Heart left ventricle (tissue), 16 donors: ENCODE measurements at regions of chr17 and their contacts with region 1.

Region 1: DNA sequence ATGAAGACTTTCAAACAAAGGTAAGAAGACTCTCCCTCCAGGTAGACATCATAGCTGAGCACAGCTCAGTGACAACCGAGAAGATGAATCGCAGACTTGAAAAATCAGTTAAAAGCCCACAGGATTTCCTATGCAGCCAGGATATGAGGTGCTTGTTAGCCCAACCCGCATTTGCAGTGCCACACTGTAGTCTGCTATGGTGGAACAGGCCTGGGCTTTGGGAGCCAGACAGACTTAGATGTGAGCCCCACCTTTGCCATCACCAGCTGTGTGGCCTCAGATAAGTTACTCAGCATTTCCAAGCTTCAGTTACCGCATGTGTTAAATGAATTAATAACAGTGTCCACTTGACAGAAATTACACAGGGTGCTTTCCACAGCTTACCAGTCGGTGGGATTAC is 204.4 kb upstream of the HS3ST3A1 start:
- DNase-seq: no peak
- ATAC-seq: no peak
- H3K4me3 ChIP-seq: no peak overlapping the region
- H3K27ac ChIP-seq: no peak overlapping the region
- H3K4me1 ChIP-seq: peaks cover 0 to 9% (median 0%) of the 10 kb centered on the region in 12 donors
- H3K27me3 ChIP-seq: no peaks in the 10 kb centered on the region
- CTCF ChIP-seq: no peak
- POLR2A ChIP-seq: no peak

Region 2: DNA sequence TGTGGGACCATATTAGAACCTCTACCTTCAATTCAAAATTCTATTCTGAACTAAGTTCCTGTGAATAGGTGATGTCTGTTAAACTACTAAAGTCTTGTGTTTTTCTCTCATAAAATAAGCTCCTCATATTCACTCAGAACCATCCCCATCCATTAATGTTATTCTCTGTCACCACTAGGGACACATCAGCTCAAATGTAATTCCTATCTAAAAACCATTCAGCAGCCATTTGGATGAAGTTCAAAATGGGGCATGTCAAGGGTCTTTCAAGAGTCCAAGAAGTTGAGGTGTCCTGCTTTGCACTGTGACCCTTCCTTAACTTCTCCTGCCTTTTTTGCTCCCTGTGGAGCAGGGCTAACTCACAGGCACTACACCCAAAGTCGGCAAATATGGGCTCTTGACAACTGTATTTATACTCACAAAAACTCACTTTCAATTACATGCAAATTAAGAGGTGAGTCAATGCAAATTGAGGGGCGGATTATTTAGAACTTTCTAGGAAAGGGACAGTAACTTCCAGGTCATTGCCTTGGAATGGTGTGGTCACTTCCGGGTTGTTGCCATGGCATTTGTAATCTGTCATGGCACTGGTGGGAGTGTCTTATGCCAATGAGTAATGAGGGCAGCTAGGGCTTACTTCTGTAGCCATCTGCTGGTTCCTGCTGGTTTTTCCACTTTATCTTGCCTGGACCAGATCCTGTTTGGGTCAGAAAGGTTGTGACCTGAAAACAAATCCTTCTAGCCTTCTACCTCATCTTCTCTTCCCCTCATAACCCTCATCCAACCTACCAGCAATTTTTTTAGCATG is 135.0 kb after region 1 on chr17:
- intact Hi-C with region 1: no loop called
- DNase-seq: no peak
- ATAC-seq: no peak
- H3K4me3 ChIP-seq: no peak overlapping the region
- H3K27ac ChIP-seq: no peak overlapping the region
- H3K4me1 ChIP-seq: no peaks in the 10 kb centered on the region
- H3K27me3 ChIP-seq: no peaks in the 10 kb centered on the region
- CTCF ChIP-seq: no peak
- POLR2A ChIP-seq: no peak

Region 3: DNA sequence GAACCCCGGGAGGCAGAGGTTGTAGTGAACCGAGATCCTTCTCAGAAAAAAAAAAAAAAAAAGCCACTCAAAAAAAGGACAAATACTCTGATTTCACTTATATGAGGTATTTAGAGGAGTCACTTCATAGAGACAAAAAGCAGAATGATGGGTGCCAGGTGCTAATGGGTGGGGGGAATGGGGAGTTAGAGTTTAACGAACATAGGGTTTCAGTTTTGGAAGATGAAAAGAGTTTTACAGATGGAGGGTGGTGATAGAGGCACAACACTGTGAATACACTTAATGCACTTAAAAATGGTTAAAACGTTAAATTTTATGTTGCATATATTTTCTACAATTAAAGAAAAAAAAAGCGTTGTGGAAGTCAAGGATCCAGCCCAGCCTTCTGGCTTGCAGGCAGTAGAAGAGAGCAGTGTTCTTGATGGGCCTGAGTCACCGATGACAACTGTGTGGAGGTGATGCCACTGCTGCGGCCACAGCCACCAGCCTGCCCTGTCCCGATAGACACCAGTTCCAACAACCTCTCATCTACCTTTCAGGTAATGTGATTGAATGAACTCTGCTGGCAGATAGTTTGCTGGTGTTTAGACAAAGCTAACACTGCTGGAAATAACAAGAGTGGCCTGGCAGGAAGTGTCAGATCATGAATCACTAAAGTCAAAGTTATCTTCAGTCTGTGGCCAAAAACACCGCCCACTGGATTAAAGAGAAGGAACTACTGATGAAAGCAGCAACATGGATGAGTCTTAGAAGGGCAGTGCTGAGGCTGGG is 213.3 kb after region 1 on chr17:
- intact Hi-C with region 1: loop called in 1 of 10 experiments (anchors 10 kb)
- DNase-seq: no peak
- ATAC-seq: no peak
- H3K4me3 ChIP-seq: no peak overlapping the region
- H3K27ac ChIP-seq: no peak overlapping the region
- H3K4me1 ChIP-seq: no peaks in the 10 kb centered on the region
- H3K27me3 ChIP-seq: peaks cover 0 to 13% (median 0%) of the 10 kb centered on the region in 9 donors
- CTCF ChIP-seq: no peak
- POLR2A ChIP-seq: no peak